ENCODE measurements at regions of chr11 and their contacts with region 1.

Region 1: DNA sequence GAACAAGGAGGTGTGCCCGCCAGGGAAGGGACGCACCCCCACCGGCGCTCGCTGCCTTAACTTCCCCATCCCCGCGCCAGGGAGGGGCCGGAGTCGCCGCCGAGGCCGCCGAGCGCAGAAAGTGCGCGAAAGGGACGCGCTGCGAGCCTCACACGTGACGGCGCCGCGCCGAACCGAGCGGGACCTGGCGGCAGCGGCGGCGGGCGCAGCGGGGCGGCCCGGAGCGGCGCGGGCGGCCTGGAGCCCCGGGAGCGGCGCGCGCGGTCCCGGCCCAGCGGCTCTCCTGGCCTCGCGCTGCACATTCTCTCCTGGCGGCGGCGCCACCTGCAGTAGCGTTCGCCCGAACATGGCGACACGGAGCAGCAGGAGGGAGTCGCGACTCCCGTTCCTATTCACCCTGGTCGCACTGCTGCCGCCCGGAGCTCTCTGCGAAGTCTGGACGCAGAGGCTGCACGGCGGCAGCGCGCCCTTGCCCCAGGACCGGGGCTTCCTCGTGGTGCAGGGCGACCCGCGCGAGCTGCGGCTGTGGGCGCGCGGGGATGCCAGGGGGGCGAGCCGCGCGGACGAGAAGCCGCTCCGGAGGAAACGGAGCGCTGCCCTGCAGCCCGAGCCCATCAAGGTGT is at the start of gene SORL1:
- DNase-seq: peak; percentile 86
- H3K4me3 ChIP-seq: peak within 1 kb of the TSS; percentile 89
- H3K27ac ChIP-seq: peak within 1 kb of the TSS; percentile 97
- H3K4me1 ChIP-seq: peaks cover 73% of the 10 kb centered on the region
- CTCF ChIP-seq: peak; percentile 67
- total RNA-seq, gene SORL1: 219 and 228 TPM in 2 replicates

Region 2: DNA sequence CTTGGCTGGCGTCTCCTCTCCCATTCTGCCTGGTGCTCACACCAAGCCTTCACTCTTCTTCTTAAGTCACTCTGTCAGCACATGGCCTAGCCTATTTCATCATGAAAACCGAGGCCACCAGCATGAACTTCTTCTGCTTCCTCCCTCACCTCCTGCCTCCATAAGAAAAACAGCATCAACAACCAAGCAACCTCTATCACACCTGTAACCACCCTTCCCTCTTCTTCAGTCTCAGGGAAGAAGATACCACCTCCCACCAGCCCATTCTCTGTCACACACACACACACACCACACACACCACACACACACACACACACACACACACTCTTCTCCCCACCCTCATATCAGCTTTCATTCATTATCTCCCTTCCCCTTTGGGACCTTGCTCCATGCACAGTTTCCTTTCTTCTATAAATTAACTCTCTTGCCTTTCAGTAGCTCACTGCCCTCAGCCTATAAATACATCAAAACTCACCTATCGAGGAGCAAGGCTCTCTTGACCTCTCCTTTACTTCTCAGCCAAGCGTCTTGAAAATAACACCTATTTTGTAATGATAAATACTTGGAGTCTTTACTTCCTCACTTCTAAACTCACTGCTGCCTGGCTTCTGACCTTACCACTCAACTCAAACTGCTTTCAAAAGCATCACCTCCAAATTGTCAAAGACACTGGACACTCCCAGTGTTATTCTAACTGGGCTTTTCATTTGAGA is 123.0 kb before region 1 on chr11:
- CTCF ChIA-PET with region 1: no interaction called
- POLR2A ChIA-PET with region 1: interaction called, 23 read pairs
- intact Hi-C with region 1: loop called (anchors 1 kb)
- DNase-seq: peak; percentile 66
- H3K4me3 ChIP-seq: peak overlapping the region; percentile 25
- H3K27ac ChIP-seq: peak overlapping the region; percentile 87
- H3K4me1 ChIP-seq: peaks cover 62% of the 10 kb centered on the region
- CTCF ChIP-seq: no peak

Region 3: GRCh38 chr11:121383716-121384115 is 68.4 kb before region 1 on chr11:
- CTCF ChIA-PET with region 1: interaction called, 3 read pairs
- POLR2A ChIA-PET with region 1: interaction called, 11 read pairs
- intact Hi-C with region 1: no loop called
- DNase-seq: no peak
- H3K4me3 ChIP-seq: no peak overlapping the region
- H3K27ac ChIP-seq: peak overlapping the region; percentile 84
- H3K4me1 ChIP-seq: peaks cover 92% of the 10 kb centered on the region
- CTCF ChIP-seq: no peak

Region 4: DNA sequence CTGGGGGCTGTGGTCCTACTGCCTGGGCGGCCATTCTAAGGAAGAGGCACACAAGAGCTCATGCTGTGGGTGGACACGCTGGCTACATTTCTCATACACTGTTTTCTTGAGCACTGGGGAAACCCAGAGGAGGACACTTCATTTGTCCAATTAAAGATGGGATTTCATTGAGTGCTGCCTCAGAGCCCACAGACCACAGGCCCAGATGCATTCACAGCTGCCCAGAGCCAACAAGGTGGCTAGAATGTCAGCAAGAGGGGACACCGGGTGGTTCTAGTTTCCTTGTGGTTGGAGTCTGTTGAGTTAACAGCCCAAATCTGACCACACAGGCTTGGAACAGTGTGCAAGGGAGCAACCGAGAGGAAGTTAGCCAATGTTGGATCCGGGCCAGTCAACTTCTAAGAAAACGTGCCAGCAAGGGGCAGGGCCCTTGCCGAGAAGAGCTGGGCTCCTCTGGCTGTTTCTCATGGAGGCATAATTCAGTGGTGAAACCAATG is 35.0 kb before region 1 on chr11:
- CTCF ChIA-PET with region 1: no interaction called
- POLR2A ChIA-PET with region 1: interaction called, 10 read pairs
- intact Hi-C with region 1: no loop called
- DNase-seq: peak; percentile 41
- H3K4me3 ChIP-seq: no peak overlapping the region
- H3K27ac ChIP-seq: peak overlapping the region; percentile 91
- H3K4me1 ChIP-seq: peaks cover 79% of the 10 kb centered on the region
- CTCF ChIP-seq: no peak

Region 5: GRCh38 chr11:121437018-121437685 is 14.9 kb before region 1 on chr11:
- CTCF ChIA-PET with region 1: interaction called, 19 read pairs
- POLR2A ChIA-PET with region 1: interaction called, 413 read pairs
- intact Hi-C with region 1: no loop called
- DNase-seq: no peak
- H3K4me3 ChIP-seq: no peak overlapping the region
- H3K27ac ChIP-seq: peak overlapping the region; percentile 99
- H3K4me1 ChIP-seq: peaks cover 70% of the 10 kb centered on the region
- CTCF ChIP-seq: no peak

Region 6: GRCh38 chr11:121534131-121535093 is 82.3 kb after region 1 on chr11:
- CTCF ChIA-PET with region 1: no interaction called
- POLR2A ChIA-PET with region 1: interaction called, 6 read pairs
- intact Hi-C with region 1: loop called (anchors 2 kb)
- DNase-seq: peak; percentile 68
- H3K4me3 ChIP-seq: peak overlapping the region; percentile 35
- H3K27ac ChIP-seq: peak overlapping the region; percentile 84
- H3K4me1 ChIP-seq: peaks cover 81% of the 10 kb centered on the region
- CTCF ChIP-seq: peak; percentile 69

Region 7: DNA sequence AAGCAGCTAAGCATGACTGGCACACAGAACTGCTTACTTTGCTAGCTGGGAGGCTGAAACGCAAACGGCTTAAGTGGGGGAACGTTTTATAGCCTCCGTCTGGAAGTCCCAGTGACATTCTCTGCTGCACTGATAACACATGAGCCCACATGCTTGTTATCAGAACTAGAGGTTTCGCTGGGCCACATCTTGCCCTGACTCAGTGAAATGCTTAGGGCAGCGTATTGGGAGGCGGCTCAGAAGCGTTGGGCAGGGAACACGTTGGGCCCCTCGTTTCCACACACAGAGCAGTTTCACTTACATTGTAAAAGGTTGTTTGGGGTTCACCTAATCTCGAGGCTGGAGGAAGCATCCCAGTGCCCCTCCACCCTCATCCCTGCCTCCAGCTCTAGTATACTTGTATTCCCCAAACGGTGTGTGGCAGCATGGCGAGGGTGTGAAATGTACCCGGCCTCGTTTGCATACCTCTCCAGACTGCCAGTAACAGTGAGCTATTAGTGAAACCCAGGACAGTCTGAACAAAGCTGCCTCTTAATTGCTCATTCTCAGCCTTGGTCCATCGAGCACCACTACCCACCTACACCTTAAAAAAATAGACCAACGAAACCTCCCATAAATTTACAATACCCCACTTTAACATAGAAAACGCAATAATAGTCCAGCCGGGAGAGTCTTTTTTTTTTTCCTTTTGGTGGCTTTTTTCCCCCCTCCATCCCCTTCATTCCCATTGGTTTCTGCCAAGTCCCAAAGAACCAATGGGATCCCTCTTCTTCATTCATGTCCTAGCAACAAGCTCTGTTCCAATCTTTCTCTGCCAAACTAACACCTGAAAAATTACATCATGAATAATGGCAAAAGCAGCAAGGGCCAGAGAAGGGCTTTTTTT is 219.4 kb after region 1 on chr11:
- CTCF ChIA-PET with region 1: no interaction called
- POLR2A ChIA-PET with region 1: no interaction called
- intact Hi-C with region 1: no loop called
- DNase-seq: no peak
- H3K4me3 ChIP-seq: no peak overlapping the region
- H3K27ac ChIP-seq: no peak overlapping the region
- H3K4me1 ChIP-seq: no peaks in the 10 kb centered on the region
- CTCF ChIP-seq: no peak

Measured in OCI-LY7 (cell line).